ENCODE measurements at regions of chr12 and their contacts with region 1.

Region 1: DNA sequence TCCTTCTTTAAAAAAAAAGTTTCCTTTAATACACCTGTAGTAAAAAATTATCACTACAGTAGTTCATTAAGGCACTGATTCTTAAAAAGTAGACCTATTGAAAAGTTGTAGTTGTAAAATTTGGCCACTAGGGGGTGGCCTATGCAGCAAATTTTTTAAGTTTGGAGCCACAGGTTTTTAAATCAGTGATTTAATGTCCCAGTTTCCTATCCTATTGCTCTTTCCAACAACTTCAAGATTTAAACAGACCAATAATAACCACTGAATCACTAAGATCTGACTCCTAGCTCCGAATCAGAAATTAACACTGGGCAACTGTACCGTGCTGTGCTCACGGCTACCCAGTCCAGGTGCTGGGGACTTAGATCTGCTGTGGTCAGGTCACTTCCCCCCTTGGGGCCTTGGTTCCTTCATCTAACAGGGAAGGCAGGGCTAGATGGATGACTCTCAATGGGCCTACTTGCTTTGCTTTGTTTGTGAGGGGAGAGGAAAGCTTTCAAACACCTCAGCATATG is 279.3 kb downstream of the MED13L start:
- DNase-seq: peak; percentile 65
- H3K4me3 Mint-ChIP-seq: no peak overlapping the region
- H3K27ac Mint-ChIP-seq: no peak overlapping the region
- H3K4me1 Mint-ChIP-seq: peaks cover 4% of the 10 kb centered on the region
- H3K27me3 Mint-ChIP-seq: no peaks in the 10 kb centered on the region

Region 2: GRCh38 chr12:116194935-116195431 is 196.8 kb after region 1 on chr12:
- intact Hi-C with region 1: loop called (anchors 2 kb)
- DNase-seq: peak; percentile 87
- H3K4me3 Mint-ChIP-seq: peak overlapping the region; percentile 65
- H3K27ac Mint-ChIP-seq: peak overlapping the region; percentile 82
- H3K4me1 Mint-ChIP-seq: peaks cover 36% of the 10 kb centered on the region
- H3K27me3 Mint-ChIP-seq: no peaks in the 10 kb centered on the region

Region 3: GRCh38 chr12:116236148-116236731 is 238.1 kb after region 1 on chr12:
- intact Hi-C with region 1: loop called (anchors 2 kb)
- DNase-seq: peak; percentile 81
- H3K4me3 Mint-ChIP-seq: peak overlapping the region; percentile 39
- H3K27ac Mint-ChIP-seq: peak overlapping the region; percentile 45
- H3K4me1 Mint-ChIP-seq: peaks cover 17% of the 10 kb centered on the region
- H3K27me3 Mint-ChIP-seq: no peaks in the 10 kb centered on the region

Region 4: GRCh38 chr12:116336542-116337065 is 338.4 kb after region 1 on chr12:
- intact Hi-C with region 1: no loop called
- DNase-seq: no peak
- H3K4me3 Mint-ChIP-seq: no peak overlapping the region
- H3K27ac Mint-ChIP-seq: no peak overlapping the region
- H3K4me1 Mint-ChIP-seq: no peaks in the 10 kb centered on the region
- H3K27me3 Mint-ChIP-seq: no peaks in the 10 kb centered on the region

Region 5: DNA sequence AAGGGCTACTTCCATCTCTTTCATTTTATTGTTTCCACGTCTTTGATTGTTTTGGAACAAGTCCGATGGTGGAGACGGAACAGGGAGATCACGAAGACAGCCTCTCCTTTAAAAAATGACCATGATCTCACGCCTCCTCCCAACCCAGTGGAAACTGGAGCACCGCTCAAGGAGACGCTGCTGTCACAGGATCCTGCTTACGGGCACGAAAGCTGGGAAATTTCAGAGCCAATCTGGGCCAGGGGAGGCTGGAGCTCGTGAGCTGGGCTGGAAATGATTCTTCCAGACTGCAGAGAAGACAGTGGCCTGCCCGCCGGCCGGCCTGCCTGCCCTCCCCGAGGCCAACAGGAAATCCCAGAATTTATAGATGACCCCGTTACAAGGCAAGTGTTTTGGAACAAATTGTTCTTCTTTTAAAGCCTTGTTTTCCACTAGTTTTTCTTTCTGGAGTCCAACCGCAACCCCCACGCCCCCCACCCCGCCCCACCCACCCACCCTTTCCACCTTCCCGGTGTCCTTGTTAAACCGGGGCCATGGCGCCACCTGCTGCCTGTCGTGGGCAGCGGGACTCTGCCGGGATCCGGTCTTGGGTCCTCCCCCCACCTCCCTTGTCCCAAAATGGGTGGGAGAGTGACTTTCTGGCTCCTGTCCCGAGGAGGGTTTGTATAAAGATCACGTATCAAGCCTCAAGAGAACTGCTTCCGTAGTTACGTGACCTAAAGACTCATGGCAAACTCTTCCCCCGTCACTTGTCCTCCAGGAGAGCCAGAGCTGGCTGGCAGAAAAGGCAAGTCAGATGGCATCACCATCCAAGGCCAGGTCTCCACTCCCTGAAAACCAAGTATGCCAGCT is 601.3 kb after region 1 on chr12:
- intact Hi-C with region 1: loop called (anchors 5 kb)
- DNase-seq: peak; percentile 86
- H3K4me3 Mint-ChIP-seq: no peak overlapping the region
- H3K27ac Mint-ChIP-seq: no peak overlapping the region
- H3K4me1 Mint-ChIP-seq: peaks cover 26% of the 10 kb centered on the region
- H3K27me3 Mint-ChIP-seq: no peaks in the 10 kb centered on the region

Region 6: DNA sequence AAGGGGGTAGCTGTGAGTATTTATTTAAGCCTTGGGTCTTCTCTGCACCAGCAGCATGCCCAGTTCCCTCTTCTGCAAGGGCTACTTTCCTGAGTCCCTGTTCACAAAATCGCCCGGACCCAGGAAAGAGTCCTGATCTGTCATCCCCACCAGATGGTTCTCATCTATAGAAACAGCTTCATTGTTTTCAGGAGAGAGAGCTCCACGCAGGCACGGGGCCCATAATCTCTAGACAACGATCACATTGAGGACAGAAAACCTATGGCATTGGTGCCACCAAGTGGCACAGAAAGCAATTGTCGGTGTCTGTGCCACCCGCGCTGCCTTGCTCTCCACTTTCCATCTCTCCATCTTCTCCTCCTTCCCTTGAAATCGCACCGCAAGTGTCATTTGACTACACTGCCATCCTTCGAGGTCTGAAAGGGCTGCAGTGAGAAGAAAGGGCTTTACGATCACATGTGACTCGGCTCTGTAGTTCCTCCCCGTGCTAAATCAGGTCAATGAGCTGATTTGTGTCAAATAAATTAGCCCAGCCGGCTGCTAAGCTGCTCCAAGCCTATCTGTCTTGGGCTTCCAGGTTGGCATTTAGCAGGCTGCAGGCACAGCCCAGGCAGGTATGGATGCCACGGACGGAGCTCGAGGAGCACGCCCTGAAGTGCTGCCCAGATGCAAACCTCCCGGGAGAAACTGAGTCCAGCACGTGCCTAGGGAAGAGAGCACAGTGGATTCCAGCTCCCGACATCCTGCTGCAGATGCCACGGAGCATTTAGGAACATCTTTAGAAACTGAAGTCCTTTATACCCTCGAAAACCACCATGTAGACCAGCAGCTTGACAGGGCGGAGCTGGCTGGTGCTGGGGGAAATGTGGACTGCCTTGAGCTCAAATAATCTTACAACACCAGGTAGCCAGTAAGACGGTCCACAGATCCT is 710.9 kb after region 1 on chr12:
- intact Hi-C with region 1: loop called (anchors 5 kb)
- DNase-seq: peak; percentile 81
- H3K4me3 Mint-ChIP-seq: peak overlapping the region; percentile 44
- H3K27ac Mint-ChIP-seq: no peak overlapping the region
- H3K4me1 Mint-ChIP-seq: peaks cover 7% of the 10 kb centered on the region
- H3K27me3 Mint-ChIP-seq: peaks cover 25% of the 10 kb centered on the region

Measured in activated CD4-positive, alpha-beta T cell treated with anti-CD3 and anti-CD28 coated beads, Interleukin-2, amount 10 ng/mL, durations not matched to agents 24 days and 14 days (primary cell).